ENCODE measurements at regions of chr9 and their contacts with region 1.

Region 1: GRCh38 chr9:113401027-113401792 is at the start of gene ALAD:
- DNase-seq: peak; percentile 99 to 100
- ATAC-seq: peak; percentile 98 to 100 (median 99)
- H3K4me3 ChIP-seq: peak within 1 kb of the TSS; percentile 64 to 93 (median 84)
- H3K27ac ChIP-seq: peak within 1 kb of the TSS; percentile 27 to 89 (median 82)
- H3K4me1 ChIP-seq: peaks cover 7 to 62% (median 36%) of the 10 kb centered on the region in 9 donors
- H3K27me3 ChIP-seq: no peaks in the 10 kb centered on the region
- CTCF ChIP-seq: peak in 8 of 9 donors; percentile 90 to 100 (median 98)
- total RNA-seq, gene ALAD: 60.9 to 239 (median 103) TPM

Region 2: GRCh38 chr9:113178087-113178486 is 223.1 kb before region 1 on chr9:
- intact Hi-C with region 1: no loop called
- DNase-seq: no peak
- ATAC-seq: no peak
- H3K4me3 ChIP-seq: no peak overlapping the region
- H3K27ac ChIP-seq: no peak overlapping the region
- H3K4me1 ChIP-seq: peaks cover 0 to 17% (median 3%) of the 10 kb centered on the region in 9 donors
- H3K27me3 ChIP-seq: no peaks in the 10 kb centered on the region
- CTCF ChIP-seq: no peak

Region 3: GRCh38 chr9:113275157-113276131 is 125.8 kb before region 1 on chr9 and contains the starts of genes CDC26 and PRPF4:
- intact Hi-C with region 1: loop called in 8 of 10 experiments (anchors 2 to 10 kb)
- DNase-seq: peak; percentile 96 to 98
- ATAC-seq: peak; percentile 98 to 99 (median 98)
- H3K4me3 ChIP-seq: peak within 1 kb of the TSS; percentile 36 to 89 (median 78)
- H3K27ac ChIP-seq: peak within 1 kb of the TSS; percentile 63 to 95 (median 90)
- H3K4me1 ChIP-seq: peaks cover 5 to 50% (median 23%) of the 10 kb centered on the region in 9 donors
- H3K27me3 ChIP-seq: no peaks in the 10 kb centered on the region
- CTCF ChIP-seq: no peak
- total RNA-seq, gene CDC26: 26.7 to 39.7 (median 30.8) TPM
- total RNA-seq, gene PRPF4: 10.7 to 17.2 (median 13.3) TPM

Region 4: GRCh38 chr9:113309204-113309813 is 91.9 kb before region 1 on chr9:
- intact Hi-C with region 1: loop called in 6 of 10 experiments (anchors 2 to 10 kb)
- DNase-seq: peak in 1 of 2 donors; percentile 34
- ATAC-seq: peak in 3 of 8 donors; percentile 69 to 76 (median 72)
- H3K4me3 ChIP-seq: no peak overlapping the region
- H3K27ac ChIP-seq: peak overlapping the region in 3 of 10 donors; percentile 71 to 77 (median 74)
- H3K4me1 ChIP-seq: peaks cover 0 to 28% (median 18%) of the 10 kb centered on the region in 9 donors
- H3K27me3 ChIP-seq: no peaks in the 10 kb centered on the region
- CTCF ChIP-seq: peak; percentile 41 to 80 (median 66)

Region 5: DNA sequence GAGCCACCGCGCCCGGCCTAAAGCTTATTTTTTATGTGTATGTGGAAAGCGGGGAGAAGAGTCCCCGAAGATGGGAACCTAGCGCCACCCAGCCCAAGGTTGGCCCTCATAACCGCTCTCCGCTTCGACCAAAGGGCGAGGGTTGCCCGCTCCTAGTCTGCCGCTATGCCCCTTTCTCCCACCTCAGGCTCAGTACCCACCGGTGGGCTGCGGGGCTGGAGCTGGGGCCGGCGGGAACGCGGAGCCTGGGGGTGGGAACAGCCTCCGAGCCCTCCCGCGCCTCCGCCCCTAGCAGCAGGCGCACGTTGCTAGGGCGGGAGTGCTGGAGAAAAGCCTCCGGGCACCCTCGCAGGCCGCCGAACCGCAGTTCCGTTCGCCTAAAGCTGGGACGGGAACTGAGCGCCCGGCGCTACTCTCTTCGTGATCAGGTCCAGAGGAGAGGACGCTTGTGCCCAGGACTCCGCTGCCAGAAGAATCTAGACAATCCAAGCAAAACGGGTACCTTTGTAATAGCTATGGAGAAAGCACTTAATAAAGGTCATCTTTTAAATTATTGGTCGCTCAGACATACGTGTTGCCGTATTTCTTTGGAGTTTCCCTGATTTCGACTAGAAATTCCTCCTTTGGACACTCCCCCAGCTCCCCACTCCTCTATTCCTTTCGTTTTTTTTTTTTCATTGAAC is 61.1 kb before region 1 on chr9 and contains the start of gene WDR31:
- intact Hi-C with region 1: loop called in 4 of 10 experiments (anchors 2 to 5 kb)
- DNase-seq: peak; percentile 86 to 88
- ATAC-seq: peak; percentile 89 to 95 (median 92)
- H3K4me3 ChIP-seq: peak within 1 kb of the TSS; percentile 62 to 97 (median 75)
- H3K27ac ChIP-seq: peak within 1 kb of the TSS; percentile 53 to 88 (median 78)
- H3K4me1 ChIP-seq: peaks cover 0 to 31% (median 22%) of the 10 kb centered on the region in 9 donors
- H3K27me3 ChIP-seq: no peaks in the 10 kb centered on the region
- CTCF ChIP-seq: peak in 2 of 9 donors; percentile 15
- total RNA-seq, gene WDR31: 13.6 to 29.0 (median 18.8) TPM

Region 6: DNA sequence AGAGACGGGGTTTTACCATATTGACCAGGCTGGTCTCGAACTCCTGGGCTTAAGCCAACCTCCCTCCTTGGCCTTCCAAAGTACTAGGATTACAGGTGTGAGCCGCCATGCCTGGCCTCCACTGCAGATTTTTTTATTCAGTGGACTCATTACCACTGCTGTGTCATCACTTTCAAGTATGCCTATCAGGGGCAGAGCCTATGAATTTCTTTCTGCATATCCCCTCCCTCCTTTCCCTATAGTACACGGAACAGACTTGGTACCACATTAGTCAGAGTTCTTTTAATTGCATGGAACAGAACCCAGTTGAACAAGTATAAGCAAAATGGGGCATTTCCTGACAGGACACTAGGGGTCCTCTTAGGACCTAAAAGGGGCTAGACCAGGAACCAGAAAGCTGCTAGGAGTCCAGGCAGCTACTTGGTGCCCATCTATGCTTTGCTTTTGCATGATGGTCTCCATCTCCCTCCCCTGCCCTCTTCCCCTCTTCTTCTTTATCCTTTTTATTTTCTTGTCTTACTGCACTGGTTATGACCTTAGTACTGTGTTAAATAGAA is 46.1 kb before region 1 on chr9:
- intact Hi-C with region 1: loop called in 1 of 10 experiments (anchors 5 kb)
- DNase-seq: no peak
- ATAC-seq: no peak
- H3K4me3 ChIP-seq: no peak overlapping the region
- H3K27ac ChIP-seq: no peak overlapping the region
- H3K4me1 ChIP-seq: peaks cover 0 to 13% (median 0%) of the 10 kb centered on the region in 9 donors
- H3K27me3 ChIP-seq: peaks cover 0 to 28% (median 23%) of the 10 kb centered on the region in 7 donors
- CTCF ChIP-seq: peak in 1 of 9 donors; percentile 6

Region 7: GRCh38 chr9:113632776-113633590 is 231.8 kb after region 1 on chr9:
- intact Hi-C with region 1: no loop called
- DNase-seq: no peak
- ATAC-seq: peak in 3 of 8 donors; percentile 9 to 43 (median 21)
- H3K4me3 ChIP-seq: no peak overlapping the region
- H3K27ac ChIP-seq: peak overlapping the region in 1 of 10 donors; percentile 33
- H3K4me1 ChIP-seq: peaks cover 3 to 55% (median 26%) of the 10 kb centered on the region in 9 donors
- H3K27me3 ChIP-seq: no peaks in the 10 kb centered on the region
- CTCF ChIP-seq: no peak